CD14-positive monocyte (primary cell): ENCODE measurements at regions of chr22 and their contacts with region 1.

Region 1: GRCh38 chr22:39446295-39446721 is 10.5 kb upstream of the MGAT3 start:
- DNase-seq: no peak
- H3K4me3 ChIP-seq: no peak overlapping the region
- H3K4me3 Mint-ChIP-seq: peak overlapping the region in 1 of 2 donors; percentile 69
- H3K27ac ChIP-seq: no peak overlapping the region
- H3K27ac Mint-ChIP-seq: peak overlapping the region in 1 of 7 donors; percentile 71
- H3K4me1 ChIP-seq: peaks cover 9 to 12% of the 10 kb centered on the region in 2 donors
- H3K4me1 Mint-ChIP-seq: peaks cover 9% of the 10 kb centered on the region
- H3K27me3 ChIP-seq: peaks cover 0 to 21% of the 10 kb centered on the region in 2 donors
- H3K27me3 Mint-ChIP-seq: peaks cover 17 to 22% (median 22%) of the 10 kb centered on the region in 3 donors
- CTCF ChIP-seq: no peak

Region 2: GRCh38 chr22:39368461-39368911 is 77.8 kb before region 1 on chr22:
- intact Hi-C with region 1: no loop called
- DNase-seq: peak in 1 of 3 donors; percentile 26
- H3K4me3 ChIP-seq: no peak overlapping the region
- H3K4me3 Mint-ChIP-seq: peak overlapping the region in 1 of 2 donors; percentile 16
- H3K27ac ChIP-seq: peak overlapping the region; percentile 36 to 49
- H3K27ac Mint-ChIP-seq: peak overlapping the region; percentile 22 to 84 (median 77)
- H3K4me1 ChIP-seq: peaks cover 22 to 23% of the 10 kb centered on the region in 2 donors
- H3K4me1 Mint-ChIP-seq: peaks cover 45% of the 10 kb centered on the region
- H3K27me3 ChIP-seq: no peaks in the 10 kb centered on the region
- H3K27me3 Mint-ChIP-seq: no peaks in the 10 kb centered on the region
- CTCF ChIP-seq: no peak

Region 3: DNA sequence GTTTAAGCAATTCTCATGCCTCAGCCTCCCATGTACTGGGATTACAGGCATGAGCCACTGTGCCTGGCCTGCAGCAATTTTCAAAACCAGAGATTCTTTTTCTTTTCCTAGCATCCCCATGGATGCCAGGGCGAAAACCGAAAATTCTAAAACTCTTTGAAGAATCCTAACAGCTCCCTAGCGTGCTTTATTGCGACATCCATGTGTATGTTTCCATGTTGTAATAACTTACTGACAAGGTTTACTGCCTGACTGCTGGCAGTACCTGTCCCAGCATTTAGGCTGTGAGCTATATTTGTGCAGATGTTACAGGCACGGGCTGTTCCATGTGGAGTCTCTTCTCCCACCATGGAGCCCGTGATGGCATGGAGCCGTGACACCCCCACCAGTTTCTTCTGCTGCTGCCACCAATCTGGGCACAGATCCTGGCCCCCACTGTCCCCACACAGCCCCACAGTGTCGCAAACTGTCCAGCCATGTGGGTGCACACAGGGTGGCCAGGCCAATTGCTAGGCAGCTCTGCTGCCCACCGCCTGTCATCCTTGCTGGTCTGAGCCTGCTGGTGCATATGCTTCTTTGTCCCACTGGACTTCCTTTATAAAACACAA is 53.9 kb before region 1 on chr22:
- intact Hi-C with region 1: loop called in 1 of 2 experiments (anchors 10 kb)
- DNase-seq: peak in 1 of 3 donors; percentile 22
- H3K4me3 ChIP-seq: no peak overlapping the region
- H3K4me3 Mint-ChIP-seq: no peak overlapping the region
- H3K27ac ChIP-seq: no peak overlapping the region
- H3K27ac Mint-ChIP-seq: peak overlapping the region in 2 of 7 donors; percentile 20 to 38
- H3K4me1 ChIP-seq: peaks cover 16 to 25% of the 10 kb centered on the region in 2 donors
- H3K4me1 Mint-ChIP-seq: peaks cover 18% of the 10 kb centered on the region
- H3K27me3 ChIP-seq: peaks cover 0 to 3% of the 10 kb centered on the region in 2 donors
- H3K27me3 Mint-ChIP-seq: peaks cover 4 to 17% (median 14%) of the 10 kb centered on the region in 3 donors
- CTCF ChIP-seq: no peak